MCF 10A (cell line): ENCODE measurements at regions of chr6 and their contacts with region 1.

Region 1: GRCh38 chr6:13574149-13574570 is 241 bp upstream of the SIRT5 start:
- DNase-seq: peak; percentile 94
- H3K4me3 Mint-ChIP-seq: peak overlapping the region; percentile 94
- H3K27ac Mint-ChIP-seq: peak overlapping the region; percentile 84
- H3K4me1 Mint-ChIP-seq: peaks cover 5% of the 10 kb centered on the region
- H3K27me3 Mint-ChIP-seq: no peaks in the 10 kb centered on the region
- CTCF ChIP-seq: peak; percentile 40

Region 2: DNA sequence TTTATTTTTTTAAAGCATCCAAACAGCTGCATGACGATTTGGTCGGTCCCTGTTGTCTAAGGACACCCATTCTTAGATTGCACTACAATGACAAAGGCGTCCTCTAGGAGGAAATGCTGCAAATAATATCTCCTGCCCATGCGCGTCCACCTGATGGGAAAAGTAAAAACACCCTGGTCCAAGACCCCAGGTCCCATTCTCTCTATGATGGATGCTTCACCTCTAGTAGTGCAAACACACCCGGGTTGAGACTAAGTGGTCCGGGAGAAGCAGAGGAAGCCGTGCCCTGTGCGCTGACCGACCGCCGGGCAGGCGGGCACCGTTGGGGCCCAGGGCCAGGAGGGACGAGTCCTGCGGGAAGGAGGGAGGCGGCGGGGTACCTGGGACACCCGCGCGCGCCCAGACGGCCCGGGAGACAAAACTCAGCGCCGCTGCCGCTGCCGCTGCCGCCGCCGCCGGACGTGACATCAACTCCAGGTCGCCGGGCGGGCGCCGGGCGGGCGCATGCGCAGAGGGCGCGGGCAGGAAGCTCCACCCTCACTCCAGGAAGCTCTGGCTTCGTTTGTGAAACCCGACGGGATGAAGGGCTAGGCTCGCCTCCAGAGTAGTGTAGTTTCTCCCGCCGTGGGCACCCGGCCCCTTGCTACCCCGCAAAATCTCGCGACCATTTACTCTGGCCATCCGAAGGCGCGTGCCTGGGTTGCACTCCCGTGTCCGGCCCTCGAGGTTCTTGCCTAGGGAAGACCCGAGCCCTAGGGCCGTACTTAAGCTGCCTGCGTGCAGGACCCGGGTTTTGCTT is 245.9 kb before region 1 on chr6 and contains the start of gene TBC1D7:
- CTCF ChIA-PET with region 1: interaction called, 12 read pairs
- POLR2A ChIA-PET with region 1: interaction called, 40 read pairs
- intact Hi-C with region 1: no loop called
- DNase-seq: peak; percentile 92
- H3K4me3 Mint-ChIP-seq: peak within 1 kb of the TSS; percentile 88
- H3K27ac Mint-ChIP-seq: peak within 1 kb of the TSS; percentile 79
- H3K4me1 Mint-ChIP-seq: no peaks in the 10 kb centered on the region
- H3K27me3 Mint-ChIP-seq: no peaks in the 10 kb centered on the region
- CTCF ChIP-seq: no peak
- total RNA-seq, gene TBC1D7: 19.5 and 28.5 TPM in 2 replicates

Region 3: GRCh38 chr6:13355043-13355951 is 218.9 kb before region 1 on chr6:
- CTCF ChIA-PET with region 1: interaction called, 3 read pairs
- POLR2A ChIA-PET with region 1: interaction called, 10 read pairs
- intact Hi-C with region 1: no loop called
- DNase-seq: peak; percentile 69
- H3K4me3 Mint-ChIP-seq: no peak overlapping the region
- H3K27ac Mint-ChIP-seq: peak overlapping the region; percentile 55
- H3K4me1 Mint-ChIP-seq: peaks cover 32% of the 10 kb centered on the region
- H3K27me3 Mint-ChIP-seq: no peaks in the 10 kb centered on the region
- CTCF ChIP-seq: no peak

Region 4: DNA sequence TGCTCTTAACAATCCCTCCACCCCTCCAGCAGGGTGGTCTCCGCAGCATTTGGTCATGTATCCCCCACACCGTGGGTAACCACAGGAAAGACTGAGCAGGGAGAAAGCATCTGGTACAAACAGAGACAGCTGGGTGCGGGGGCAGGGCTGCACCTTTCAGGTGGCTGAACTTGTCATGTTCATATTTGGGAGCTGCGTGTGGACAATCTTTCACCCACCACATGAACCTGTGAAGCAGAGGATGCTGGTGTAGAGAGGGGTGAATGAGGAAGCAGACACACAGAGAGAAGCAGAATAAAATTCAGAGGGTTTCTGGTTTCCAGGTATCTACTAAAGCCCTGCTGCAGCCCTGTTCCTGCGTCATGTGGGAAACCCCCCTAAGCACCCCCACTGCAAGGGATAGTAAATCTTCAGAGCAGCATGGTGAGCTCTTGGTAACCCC is 95.6 kb before region 1 on chr6:
- CTCF ChIA-PET with region 1: no interaction called
- POLR2A ChIA-PET with region 1: interaction called, 19 read pairs
- intact Hi-C with region 1: no loop called
- DNase-seq: no peak
- H3K4me3 Mint-ChIP-seq: no peak overlapping the region
- H3K27ac Mint-ChIP-seq: no peak overlapping the region
- H3K4me1 Mint-ChIP-seq: peaks cover 32% of the 10 kb centered on the region
- H3K27me3 Mint-ChIP-seq: no peaks in the 10 kb centered on the region
- CTCF ChIP-seq: no peak

Region 5: GRCh38 chr6:13538084-13538483 is 36.1 kb before region 1 on chr6:
- CTCF ChIA-PET with region 1: interaction called, 10 read pairs
- POLR2A ChIA-PET with region 1: interaction called, 5 read pairs
- intact Hi-C with region 1: no loop called
- DNase-seq: peak; percentile 58
- H3K4me3 Mint-ChIP-seq: no peak overlapping the region
- H3K27ac Mint-ChIP-seq: no peak overlapping the region
- H3K4me1 Mint-ChIP-seq: no peaks in the 10 kb centered on the region
- H3K27me3 Mint-ChIP-seq: no peaks in the 10 kb centered on the region
- CTCF ChIP-seq: peak; percentile 35

Region 6: DNA sequence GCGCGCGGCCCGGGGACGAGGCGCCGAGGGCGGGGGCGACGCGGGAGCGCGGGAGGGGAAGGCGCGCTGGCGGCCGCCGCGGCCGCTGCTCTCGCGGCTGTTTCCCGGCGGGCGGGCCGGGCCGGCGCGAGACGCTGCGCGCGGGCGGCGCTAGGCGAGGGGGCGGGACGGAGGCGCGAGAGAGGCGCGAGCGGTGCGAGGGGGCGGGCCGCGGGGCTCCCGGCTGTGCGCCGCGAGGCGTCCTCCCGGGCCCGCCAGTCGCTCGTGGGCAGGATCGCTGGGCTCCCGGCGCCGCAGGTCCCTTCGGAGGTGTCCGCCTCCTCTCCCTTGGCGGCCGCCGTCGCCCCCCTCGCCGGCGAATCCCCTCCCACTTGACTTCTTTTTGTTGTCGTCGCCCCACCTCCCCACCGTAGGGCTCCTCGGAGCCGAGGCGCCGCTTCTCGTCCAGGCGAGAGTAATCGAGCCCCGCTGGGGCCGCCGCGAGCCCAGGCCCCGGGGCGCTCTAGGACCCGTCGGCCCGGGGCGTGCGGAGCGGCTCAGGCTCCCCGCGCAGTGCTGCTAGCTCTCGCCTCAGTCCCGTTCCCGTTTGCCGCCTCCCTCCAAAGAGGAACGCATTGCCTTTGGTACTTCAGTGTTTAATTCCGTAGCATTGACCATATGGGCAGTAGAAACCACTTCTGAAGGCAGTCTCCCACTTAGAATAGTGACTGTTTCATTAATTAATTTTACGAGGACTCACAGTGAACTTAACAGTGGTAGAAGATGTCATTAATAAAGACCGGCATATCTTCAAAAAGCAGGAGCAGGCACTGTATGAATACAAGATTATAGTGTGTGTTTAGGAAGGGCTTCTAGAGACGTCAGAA is 137.8 kb after region 1 on chr6 and contains the start of gene RANBP9:
- CTCF ChIA-PET with region 1: interaction called, 6 read pairs
- POLR2A ChIA-PET with region 1: interaction called, 26 read pairs
- intact Hi-C with region 1: no loop called
- DNase-seq: peak; percentile 82
- H3K4me3 Mint-ChIP-seq: peak within 1 kb of the TSS; percentile 99
- H3K27ac Mint-ChIP-seq: peak within 1 kb of the TSS; percentile 93
- H3K4me1 Mint-ChIP-seq: peaks cover 24% of the 10 kb centered on the region
- H3K27me3 Mint-ChIP-seq: no peaks in the 10 kb centered on the region
- CTCF ChIP-seq: no peak
- total RNA-seq, gene RANBP9: 42.0 and 48.0 TPM in 2 replicates